CD14-positive monocyte (primary cell): ENCODE measurements at regions of chr7 and their contacts with region 1.

Region 1: GRCh38 chr7:106659963-106660861 is 746 bp downstream of the CCDC71L start:
- DNase-seq: peak; percentile 77 to 81 (median 78)
- H3K4me3 ChIP-seq: peak overlapping the region; percentile 83 to 99 (median 83)
- H3K4me3 Mint-ChIP-seq: peak overlapping the region; percentile 88 to 93
- H3K27ac ChIP-seq: peak overlapping the region; percentile 80 to 84
- H3K27ac Mint-ChIP-seq: peak overlapping the region; percentile 13 to 95 (median 87)
- H3K4me1 ChIP-seq: peaks cover 11 to 23% of the 10 kb centered on the region in 2 donors
- H3K4me1 Mint-ChIP-seq: peaks cover 23% of the 10 kb centered on the region
- H3K27me3 ChIP-seq: no peaks in the 10 kb centered on the region
- H3K27me3 Mint-ChIP-seq: peaks cover 0 to 4% (median 0%) of the 10 kb centered on the region in 3 donors
- CTCF ChIP-seq: peak; percentile 93

Region 2: GRCh38 chr7:106176414-106177299 is 483.6 kb before region 1 on chr7:
- intact Hi-C with region 1: loop called in 1 of 2 experiments (anchors 5 kb)
- DNase-seq: peak; percentile 44 to 66 (median 60)
- H3K4me3 ChIP-seq: no peak overlapping the region
- H3K4me3 Mint-ChIP-seq: peak overlapping the region in 1 of 2 donors; percentile 40
- H3K27ac ChIP-seq: no peak overlapping the region
- H3K27ac Mint-ChIP-seq: peak overlapping the region in 1 of 7 donors; percentile 35
- H3K4me1 ChIP-seq: no peaks in the 10 kb centered on the region
- H3K4me1 Mint-ChIP-seq: peaks cover 4% of the 10 kb centered on the region
- H3K27me3 ChIP-seq: peaks cover 0 to 5% of the 10 kb centered on the region in 2 donors
- H3K27me3 Mint-ChIP-seq: peaks cover 9 to 26% (median 12%) of the 10 kb centered on the region in 3 donors
- CTCF ChIP-seq: peak; percentile 86

Region 3: DNA sequence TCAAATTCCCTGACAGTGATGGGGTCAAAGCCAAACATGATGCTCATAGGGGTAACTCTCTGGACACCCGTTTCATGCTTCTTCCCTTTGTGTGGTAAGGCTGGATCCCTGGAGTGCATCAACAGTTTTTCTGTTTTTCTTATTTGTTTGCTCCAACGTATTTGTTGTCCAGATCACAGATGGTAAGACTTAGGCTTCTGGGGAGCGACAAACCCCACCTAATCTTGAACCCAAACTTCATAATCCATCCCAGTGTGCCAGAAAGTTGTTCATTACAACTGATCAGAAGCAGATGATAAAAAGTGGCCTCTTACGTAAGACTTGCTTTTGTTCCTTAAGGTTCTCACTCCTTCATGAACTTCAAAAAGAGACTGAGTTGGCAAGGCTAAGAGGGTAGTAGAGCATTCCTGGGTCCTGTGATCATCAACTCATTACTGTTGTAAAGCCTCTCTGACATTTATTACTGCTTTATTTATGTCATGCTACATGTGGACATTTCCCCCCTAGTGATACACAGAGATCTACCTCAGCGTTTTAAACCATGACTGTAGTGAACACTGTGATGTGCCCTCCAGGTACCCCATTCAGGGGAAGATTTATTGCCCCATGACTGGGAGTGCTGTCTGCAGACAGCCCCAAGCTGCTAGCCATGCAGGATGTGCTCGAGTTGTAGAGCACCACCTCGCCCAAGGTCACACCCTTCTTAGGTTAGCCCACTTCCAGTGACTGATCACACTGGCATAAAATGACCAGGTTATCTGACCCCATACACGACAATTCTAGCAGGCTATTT is 124.8 kb before region 1 on chr7:
- intact Hi-C with region 1: loop called (anchors 10 kb)
- DNase-seq: no peak
- H3K4me3 ChIP-seq: no peak overlapping the region
- H3K4me3 Mint-ChIP-seq: no peak overlapping the region
- H3K27ac ChIP-seq: no peak overlapping the region
- H3K27ac Mint-ChIP-seq: peak overlapping the region in 2 of 7 donors; percentile 8 to 9
- H3K4me1 ChIP-seq: no peaks in the 10 kb centered on the region
- H3K4me1 Mint-ChIP-seq: peaks cover 3% of the 10 kb centered on the region
- H3K27me3 ChIP-seq: no peaks in the 10 kb centered on the region
- H3K27me3 Mint-ChIP-seq: peaks cover 0 to 2% (median 0%) of the 10 kb centered on the region in 3 donors
- CTCF ChIP-seq: no peak

Region 4: DNA sequence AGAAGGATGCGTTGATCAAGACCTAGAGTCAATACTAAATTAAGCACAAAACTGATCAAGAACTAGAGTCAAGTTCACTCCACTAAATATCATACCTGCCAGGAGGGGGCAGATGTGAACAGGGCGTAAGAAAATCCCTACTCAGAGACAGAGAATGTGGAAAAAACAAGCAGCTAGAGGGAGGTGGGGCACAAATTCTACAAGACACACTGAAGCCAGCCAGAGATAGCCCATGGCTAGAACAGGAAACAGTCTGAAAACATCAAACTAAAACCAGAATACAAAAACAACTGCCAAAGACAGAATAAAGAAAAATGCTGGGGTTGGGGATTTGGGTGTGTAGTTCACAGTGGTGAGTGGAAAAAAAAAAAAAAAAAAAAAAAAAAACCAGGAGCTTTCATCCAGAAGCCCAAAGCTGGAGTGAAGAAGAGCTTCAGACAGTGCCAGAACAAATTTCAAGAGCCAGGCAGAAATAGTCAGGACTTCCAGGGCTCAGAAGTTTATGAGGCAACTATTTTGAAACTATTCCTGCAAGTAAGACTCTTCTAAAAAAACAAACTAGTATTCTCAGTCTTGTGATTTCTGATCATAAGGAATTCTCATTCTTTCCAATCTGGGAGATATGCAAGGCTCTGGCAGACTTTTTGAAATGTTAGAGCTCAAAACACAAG is 117.5 kb before region 1 on chr7:
- intact Hi-C with region 1: loop called (anchors 10 kb)
- DNase-seq: peak; percentile 54 to 66 (median 58)
- H3K4me3 ChIP-seq: no peak overlapping the region
- H3K4me3 Mint-ChIP-seq: no peak overlapping the region
- H3K27ac ChIP-seq: no peak overlapping the region
- H3K27ac Mint-ChIP-seq: peak overlapping the region in 2 of 7 donors; percentile 8 to 50
- H3K4me1 ChIP-seq: peaks cover 0 to 5% of the 10 kb centered on the region in 2 donors
- H3K4me1 Mint-ChIP-seq: peaks cover 8% of the 10 kb centered on the region
- H3K27me3 ChIP-seq: no peaks in the 10 kb centered on the region
- H3K27me3 Mint-ChIP-seq: peaks cover 0 to 5% (median 0%) of the 10 kb centered on the region in 3 donors
- CTCF ChIP-seq: peak; percentile 70

Region 5: DNA sequence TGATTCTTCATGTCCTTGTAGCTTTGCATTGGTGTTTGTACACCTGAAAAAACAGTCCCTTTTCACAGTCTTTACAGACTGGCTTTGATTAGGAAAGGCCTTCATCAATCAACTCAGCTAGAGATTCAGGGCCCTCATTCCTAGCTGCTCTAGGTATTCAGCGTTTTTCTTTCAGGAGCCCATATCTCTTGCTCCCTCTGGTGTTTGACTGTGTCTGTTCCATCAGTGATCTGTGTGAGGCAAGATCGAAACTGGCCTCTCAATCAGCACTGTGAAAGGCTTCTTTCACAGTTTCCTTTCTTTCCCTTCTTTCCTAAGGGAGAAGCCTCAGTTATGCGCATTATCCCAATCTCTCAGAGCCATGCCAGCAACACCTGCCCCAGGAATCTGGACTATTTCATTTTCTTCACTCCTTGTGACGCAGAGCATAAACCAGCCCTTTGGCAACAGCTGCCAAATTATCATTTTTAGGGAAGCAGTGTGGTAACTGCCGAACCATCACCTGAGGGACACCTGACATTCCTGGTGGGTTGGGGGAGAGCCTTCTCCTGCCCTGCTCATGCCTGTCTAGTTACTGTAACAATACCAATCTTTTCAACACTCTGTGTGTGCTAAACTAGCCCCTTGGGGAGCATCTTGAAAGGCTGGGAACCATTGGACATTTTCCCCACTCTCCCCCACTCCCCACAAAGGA is 76.4 kb after region 1 on chr7:
- intact Hi-C with region 1: loop called (anchors 1 to 5 kb)
- DNase-seq: peak; percentile 67 to 81 (median 77)
- H3K4me3 ChIP-seq: peak overlapping the region in 2 of 3 experiments; percentile 33 to 57
- H3K4me3 Mint-ChIP-seq: peak overlapping the region; percentile 67 to 84
- H3K27ac ChIP-seq: no peak overlapping the region
- H3K27ac Mint-ChIP-seq: peak overlapping the region in 6 of 7 donors; percentile 27 to 84 (median 72)
- H3K4me1 ChIP-seq: peaks cover 7 to 20% of the 10 kb centered on the region in 2 donors
- H3K4me1 Mint-ChIP-seq: peaks cover 20% of the 10 kb centered on the region
- H3K27me3 ChIP-seq: no peaks in the 10 kb centered on the region
- H3K27me3 Mint-ChIP-seq: peaks cover 2 to 9% (median 6%) of the 10 kb centered on the region in 3 donors
- CTCF ChIP-seq: peak; percentile 87

Region 6: GRCh38 chr7:106865130-106866041 is 205.2 kb after region 1 on chr7 and contains the start of gene PIK3CG:
- intact Hi-C with region 1: loop called in 1 of 2 experiments (anchors 10 kb)
- DNase-seq: peak; percentile 78 to 87 (median 83)
- H3K4me3 ChIP-seq: peak within 1 kb of the TSS; percentile 60 to 100 (median 92)
- H3K4me3 Mint-ChIP-seq: peak within 1 kb of the TSS; percentile 85 to 96
- H3K27ac ChIP-seq: peak within 1 kb of the TSS; percentile 42 to 91
- H3K27ac Mint-ChIP-seq: peak within 1 kb of the TSS; percentile 91 to 97 (median 94)
- H3K4me1 ChIP-seq: peaks cover 59 to 81% of the 10 kb centered on the region in 2 donors
- H3K4me1 Mint-ChIP-seq: peaks cover 75% of the 10 kb centered on the region
- H3K27me3 ChIP-seq: no peaks in the 10 kb centered on the region
- H3K27me3 Mint-ChIP-seq: no peaks in the 10 kb centered on the region
- CTCF ChIP-seq: no peak
- polyA plus RNA-seq, gene PIK3CG: 17.9 to 31.2 (median 20.7) TPM